Breast epithelium (tissue), 4 donors: ENCODE measurements at regions of chr16 and their contacts with region 1.

Region 1: GRCh38 chr16:24778676-24779075 is 49.2 kb downstream of the TNRC6A start:
- DNase-seq: no peak
- H3K4me3 ChIP-seq: no peak overlapping the region
- H3K27ac ChIP-seq: no peak overlapping the region
- H3K4me1 ChIP-seq: no peaks in the 10 kb centered on the region
- H3K27me3 ChIP-seq: no peaks in the 10 kb centered on the region
- CTCF ChIP-seq: no peak
- POLR2A ChIP-seq: no peak

Region 2: DNA sequence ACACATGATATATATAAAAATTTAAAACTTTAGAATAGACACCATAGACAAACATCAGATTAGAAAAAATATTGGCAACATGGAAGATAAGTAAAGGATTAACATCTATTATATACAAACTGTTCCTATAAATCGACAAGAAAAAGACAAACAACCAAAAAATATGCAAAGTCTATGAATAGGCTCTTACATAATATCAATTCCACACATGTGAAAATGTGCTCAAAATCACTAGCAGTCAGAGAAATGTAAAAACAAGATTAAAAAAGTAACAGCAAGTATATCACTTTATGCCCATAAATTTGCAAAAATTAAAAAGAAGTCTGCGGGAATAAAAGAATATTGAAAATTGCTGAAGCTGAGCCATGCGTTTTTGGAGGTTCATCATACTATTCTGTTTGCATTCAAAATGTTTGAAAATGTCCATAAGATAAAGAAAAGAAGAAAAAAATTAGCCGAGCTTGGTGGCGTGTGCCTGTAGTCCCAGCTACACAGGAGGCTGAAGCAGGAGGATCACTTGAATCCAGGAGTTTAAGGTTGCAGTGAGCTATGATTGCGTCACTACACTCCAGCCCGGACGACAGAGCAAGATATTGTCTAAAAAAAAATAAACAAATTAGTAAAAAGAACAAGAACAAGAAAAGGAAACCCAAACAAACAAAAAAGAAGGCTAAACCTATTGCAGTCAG is 1054.4 kb before region 1 on chr16:
- intact Hi-C with region 1: no loop called
- DNase-seq: no peak
- H3K4me3 ChIP-seq: no peak overlapping the region
- H3K27ac ChIP-seq: no peak overlapping the region
- H3K4me1 ChIP-seq: no peaks in the 10 kb centered on the region
- H3K27me3 ChIP-seq: no peaks in the 10 kb centered on the region
- CTCF ChIP-seq: no peak
- POLR2A ChIP-seq: no peak

Region 3: GRCh38 chr16:24789881-24790280 is 11.2 kb after region 1 on chr16:
- intact Hi-C with region 1: no loop called
- DNase-seq: no peak
- H3K4me3 ChIP-seq: no peak overlapping the region
- H3K27ac ChIP-seq: no peak overlapping the region
- H3K4me1 ChIP-seq: no peaks in the 10 kb centered on the region
- H3K27me3 ChIP-seq: no peaks in the 10 kb centered on the region
- CTCF ChIP-seq: no peak
- POLR2A ChIP-seq: no peak

Region 4: DNA sequence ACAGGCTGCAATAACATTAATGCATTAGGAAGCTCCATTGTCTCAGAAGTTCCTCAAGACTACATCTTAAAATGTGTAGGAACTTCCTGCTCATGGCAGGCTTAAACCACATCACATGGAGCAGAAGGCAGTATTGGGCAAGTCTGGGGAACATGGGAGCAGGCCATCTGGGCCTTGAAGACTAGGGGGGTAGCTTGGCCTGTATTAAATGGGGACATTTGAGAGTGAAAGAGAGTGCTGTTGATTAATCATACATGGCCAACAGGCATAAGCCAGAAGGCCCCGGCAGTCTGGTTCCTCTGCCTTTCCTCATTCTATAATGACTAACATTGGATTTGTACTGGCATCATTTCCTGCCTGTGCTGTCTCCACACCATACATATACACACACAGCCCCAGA is 41.8 kb after region 1 on chr16:
- intact Hi-C with region 1: loop called (anchors 2 kb)
- DNase-seq: no peak
- H3K4me3 ChIP-seq: no peak overlapping the region
- H3K27ac ChIP-seq: peak overlapping the region in 1 of 2 donors; percentile 6
- H3K4me1 ChIP-seq: no peaks in the 10 kb centered on the region
- H3K27me3 ChIP-seq: no peaks in the 10 kb centered on the region
- CTCF ChIP-seq: no peak
- POLR2A ChIP-seq: no peak